ENCODE measurements at regions of chr2 and their contacts with region 1.

Region 1: GRCh38 chr2:27211829-27212627 is at the starts of genes ATRAID and SLC5A6:
- DNase-seq: peak; percentile 90
- H3K4me3 Mint-ChIP-seq: peak within 1 kb of the TSS; percentile 99
- H3K27ac Mint-ChIP-seq: peak within 1 kb of the TSS; percentile 100
- H3K4me1 Mint-ChIP-seq: peaks cover 53% of the 10 kb centered on the region
- H3K27me3 Mint-ChIP-seq: no peaks in the 10 kb centered on the region
- total RNA-seq, gene ATRAID: 107 and 111 TPM in 2 replicates
- total RNA-seq, gene SLC5A6: 89.2 and 105 TPM in 2 replicates

Region 2: DNA sequence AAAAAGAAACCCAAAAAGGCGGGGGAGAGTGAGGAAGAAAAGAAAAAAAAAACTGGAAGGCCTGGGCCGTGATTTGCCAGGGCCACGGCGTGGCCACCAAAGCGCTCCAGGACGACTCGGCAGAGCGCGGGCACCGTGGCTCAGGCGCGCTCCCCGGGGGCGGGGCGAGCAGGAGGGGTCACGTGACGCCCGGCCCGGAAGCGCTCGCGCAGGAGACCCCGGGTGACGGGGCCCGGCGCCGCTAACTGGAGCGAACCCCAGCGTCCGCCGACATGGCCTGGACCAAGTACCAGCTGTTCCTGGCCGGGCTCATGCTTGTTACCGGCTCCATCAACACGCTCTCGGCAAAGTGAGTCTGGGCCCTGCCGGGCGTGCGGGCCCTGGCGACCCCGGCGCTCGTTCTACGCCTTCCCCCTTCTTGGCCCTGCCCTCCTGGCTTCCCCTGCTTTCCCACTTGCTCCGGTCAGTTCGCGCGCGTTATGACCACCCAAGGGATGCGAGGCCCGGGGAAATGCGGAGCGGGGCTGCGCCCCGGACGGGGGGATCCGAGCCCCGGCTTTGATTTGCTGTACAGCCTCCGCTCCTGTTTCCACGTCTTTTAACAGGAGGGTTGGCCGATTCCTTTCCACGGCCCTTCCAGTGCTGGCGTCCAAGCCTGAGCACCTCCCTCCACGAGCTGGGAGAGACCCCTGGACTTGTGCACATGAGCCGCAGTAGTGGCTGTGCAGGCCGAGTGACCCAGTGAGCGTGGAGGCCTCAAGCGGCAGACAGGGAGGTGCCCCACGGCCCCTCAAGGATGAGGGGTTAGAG is 447.7 kb before region 1 on chr2 and contains the start of gene SLC35F6:
- intact Hi-C with region 1: loop called (anchors 2 kb)
- DNase-seq: peak; percentile 81
- H3K4me3 Mint-ChIP-seq: peak within 1 kb of the TSS; percentile 87
- H3K27ac Mint-ChIP-seq: peak within 1 kb of the TSS; percentile 85
- H3K4me1 Mint-ChIP-seq: peaks cover 34% of the 10 kb centered on the region
- H3K27me3 Mint-ChIP-seq: peaks cover 2% of the 10 kb centered on the region
- total RNA-seq, gene SLC35F6: 14.3 and 14.5 TPM in 2 replicates

Region 3: GRCh38 chr2:27050281-27050995 is 161.6 kb before region 1 on chr2:
- intact Hi-C with region 1: loop called (anchors 1 kb)
- DNase-seq: peak; percentile 88
- H3K4me3 Mint-ChIP-seq: peak overlapping the region; percentile 96
- H3K27ac Mint-ChIP-seq: peak overlapping the region; percentile 99
- H3K4me1 Mint-ChIP-seq: peaks cover 36% of the 10 kb centered on the region
- H3K27me3 Mint-ChIP-seq: peaks cover 7% of the 10 kb centered on the region

Region 4: GRCh38 chr2:27071277-27071989 is 140.6 kb before region 1 on chr2 and contains the start of gene OST4:
- intact Hi-C with region 1: loop called (anchors 1 kb)
- DNase-seq: peak; percentile 91
- H3K4me3 Mint-ChIP-seq: peak within 1 kb of the TSS; percentile 99
- H3K27ac Mint-ChIP-seq: peak within 1 kb of the TSS; percentile 98
- H3K4me1 Mint-ChIP-seq: peaks cover 84% of the 10 kb centered on the region
- H3K27me3 Mint-ChIP-seq: peaks cover 2% of the 10 kb centered on the region
- total RNA-seq, gene OST4: 322 and 332 TPM in 2 replicates

Region 5: GRCh38 chr2:27133905-27134780 is 77.9 kb before region 1 on chr2 and contains the start of gene PREB:
- intact Hi-C with region 1: loop called (anchors 1 kb)
- DNase-seq: peak; percentile 99
- H3K4me3 Mint-ChIP-seq: peak within 1 kb of the TSS; percentile 95
- H3K27ac Mint-ChIP-seq: peak within 1 kb of the TSS; percentile 98
- H3K4me1 Mint-ChIP-seq: peaks cover 12% of the 10 kb centered on the region
- H3K27me3 Mint-ChIP-seq: no peaks in the 10 kb centered on the region
- total RNA-seq, gene PREB: 95.9 and 97.1 TPM in 2 replicates

Region 6: DNA sequence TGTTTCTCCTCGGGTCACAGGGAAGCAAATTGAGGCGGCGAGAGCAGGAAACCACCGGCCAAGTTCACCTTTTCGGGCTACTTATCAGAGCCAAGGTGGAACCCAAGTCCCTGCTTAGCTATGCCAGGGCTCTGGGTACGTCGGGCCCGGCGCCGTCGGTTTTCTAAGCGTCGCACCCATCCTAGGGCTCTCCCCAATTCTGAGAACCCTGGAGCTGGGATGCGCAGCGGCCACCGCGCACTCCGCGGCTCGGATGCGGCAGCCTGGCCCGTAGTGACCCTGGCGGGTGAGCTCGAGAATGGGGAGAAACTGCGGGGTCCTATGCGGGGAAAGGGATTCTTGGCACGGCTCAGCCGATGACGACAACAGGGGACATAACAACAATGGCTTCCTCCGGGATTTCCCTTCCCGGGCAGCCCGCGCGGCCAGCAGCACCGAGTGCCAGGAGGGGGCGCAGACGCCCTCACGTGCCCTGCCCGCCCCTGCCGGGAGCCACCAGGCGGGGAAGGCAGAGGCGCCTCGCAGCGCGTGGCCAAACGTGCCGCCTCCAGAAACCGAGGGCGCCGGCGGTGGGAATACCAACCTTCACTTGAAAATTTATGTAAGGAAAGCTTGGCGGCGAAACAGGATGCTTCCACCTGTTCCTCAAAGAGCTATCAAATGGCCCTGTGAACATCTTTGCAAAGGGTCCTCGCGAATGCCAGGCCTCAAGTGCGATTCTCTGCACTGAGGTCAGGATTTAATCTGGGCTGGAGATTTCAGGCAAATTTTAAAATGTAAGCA is 52.9 kb after region 1 on chr2:
- intact Hi-C with region 1: loop called (anchors 1 kb)
- DNase-seq: peak; percentile 32
- H3K4me3 Mint-ChIP-seq: peak overlapping the region; percentile 43
- H3K27ac Mint-ChIP-seq: peak overlapping the region; percentile 7
- H3K4me1 Mint-ChIP-seq: peaks cover 14% of the 10 kb centered on the region
- H3K27me3 Mint-ChIP-seq: peaks cover 44% of the 10 kb centered on the region